ENCODE measurements at regions of chr19 and their contacts with region 1.

Region 1: GRCh38 chr19:19554074-19555023 is 16.3 kb downstream of the CILP2 start:
- DNase-seq: peak; percentile 77
- H3K4me3 Mint-ChIP-seq: no peak overlapping the region
- H3K27ac Mint-ChIP-seq: peak overlapping the region; percentile 8
- H3K4me1 Mint-ChIP-seq: peaks cover 3% of the 10 kb centered on the region
- H3K27me3 Mint-ChIP-seq: no peaks in the 10 kb centered on the region

Region 2: DNA sequence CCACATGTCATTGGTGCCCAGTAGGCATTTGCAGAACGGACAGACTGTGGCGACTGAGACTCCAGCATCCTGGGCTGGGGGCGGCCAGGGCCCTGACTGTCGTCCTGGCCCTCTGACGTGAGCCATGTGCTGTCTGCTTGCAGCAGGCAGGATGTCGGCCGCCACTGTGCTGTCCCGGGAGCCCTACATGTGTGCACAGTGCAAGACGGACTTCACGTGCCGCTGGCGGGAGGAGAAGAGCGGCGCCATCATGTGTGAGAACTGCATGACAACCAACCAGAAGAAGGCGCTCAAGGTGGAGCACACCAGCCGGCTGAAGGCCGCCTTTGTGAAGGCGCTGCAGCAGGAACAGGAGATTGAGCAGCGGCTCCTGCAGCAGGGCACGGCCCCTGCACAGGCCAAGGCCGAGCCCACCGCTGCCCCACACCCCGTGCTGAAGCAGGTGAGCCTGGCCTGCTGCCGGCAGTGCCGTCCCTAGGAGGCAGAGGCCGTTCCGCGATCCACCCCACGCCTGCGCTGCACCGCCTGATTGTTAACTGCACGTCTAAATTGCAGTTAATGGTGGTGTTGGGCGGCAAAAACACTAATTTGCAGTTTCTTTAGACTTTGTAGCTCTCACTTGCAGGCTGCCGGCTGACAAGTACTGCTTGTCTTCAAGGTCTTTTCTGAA is 53.2 kb before region 1 on chr19:
- CTCF ChIA-PET with region 1: no interaction called
- POLR2A ChIA-PET with region 1: no interaction called
- intact Hi-C with region 1: no loop called
- DNase-seq: no peak
- H3K4me3 Mint-ChIP-seq: no peak overlapping the region
- H3K27ac Mint-ChIP-seq: no peak overlapping the region
- H3K4me1 Mint-ChIP-seq: no peaks in the 10 kb centered on the region
- H3K27me3 Mint-ChIP-seq: no peaks in the 10 kb centered on the region

Region 3: GRCh38 chr19:19531951-19532805 is 22.2 kb before region 1 on chr19:
- CTCF ChIA-PET with region 1: interaction called, 98 read pairs
- POLR2A ChIA-PET with region 1: no interaction called
- intact Hi-C with region 1: no loop called
- DNase-seq: peak; percentile 89
- H3K4me3 Mint-ChIP-seq: no peak overlapping the region
- H3K27ac Mint-ChIP-seq: no peak overlapping the region
- H3K4me1 Mint-ChIP-seq: peaks cover 11% of the 10 kb centered on the region
- H3K27me3 Mint-ChIP-seq: no peaks in the 10 kb centered on the region

Region 4: GRCh38 chr19:19568802-19569756 is 14.7 kb after region 1 on chr19:
- CTCF ChIA-PET with region 1: interaction called, 12 read pairs
- POLR2A ChIA-PET with region 1: interaction called, 3 read pairs
- intact Hi-C with region 1: no loop called
- DNase-seq: peak; percentile 55
- H3K4me3 Mint-ChIP-seq: no peak overlapping the region
- H3K27ac Mint-ChIP-seq: peak overlapping the region; percentile 74
- H3K4me1 Mint-ChIP-seq: peaks cover 8% of the 10 kb centered on the region
- H3K27me3 Mint-ChIP-seq: no peaks in the 10 kb centered on the region

Region 5: GRCh38 chr19:19591133-19591825 is 36.9 kb after region 1 on chr19:
- CTCF ChIA-PET with region 1: interaction called, 51 read pairs
- POLR2A ChIA-PET with region 1: interaction called, 3 read pairs
- intact Hi-C with region 1: no loop called
- DNase-seq: peak; percentile 89
- H3K4me3 Mint-ChIP-seq: peak overlapping the region; percentile 60
- H3K27ac Mint-ChIP-seq: peak overlapping the region; percentile 100
- H3K4me1 Mint-ChIP-seq: peaks cover 72% of the 10 kb centered on the region
- H3K27me3 Mint-ChIP-seq: no peaks in the 10 kb centered on the region

Region 6: GRCh38 chr19:19618219-19619051 is 64.1 kb after region 1 on chr19 and contains the start of gene PBX4:
- CTCF ChIA-PET with region 1: interaction called, 10 read pairs
- POLR2A ChIA-PET with region 1: no interaction called
- intact Hi-C with region 1: no loop called
- DNase-seq: peak; percentile 99
- H3K4me3 Mint-ChIP-seq: peak within 1 kb of the TSS; percentile 94
- H3K27ac Mint-ChIP-seq: peak within 1 kb of the TSS; percentile 81
- H3K4me1 Mint-ChIP-seq: peaks cover 43% of the 10 kb centered on the region
- H3K27me3 Mint-ChIP-seq: no peaks in the 10 kb centered on the region
- total RNA-seq, gene PBX4: 44.9 to 45.7 TPM

Region 7: GRCh38 chr19:19652456-19653295 is 98.3 kb after region 1 on chr19:
- CTCF ChIA-PET with region 1: interaction called, 11 read pairs
- POLR2A ChIA-PET with region 1: interaction called, 3 read pairs
- intact Hi-C with region 1: no loop called
- DNase-seq: no peak
- H3K4me3 Mint-ChIP-seq: no peak overlapping the region
- H3K27ac Mint-ChIP-seq: no peak overlapping the region
- H3K4me1 Mint-ChIP-seq: no peaks in the 10 kb centered on the region
- H3K27me3 Mint-ChIP-seq: no peaks in the 10 kb centered on the region